Heart right ventricle (tissue), 16 donors: ENCODE measurements at regions of chr3 and their contacts with region 1.

Region 1: DNA sequence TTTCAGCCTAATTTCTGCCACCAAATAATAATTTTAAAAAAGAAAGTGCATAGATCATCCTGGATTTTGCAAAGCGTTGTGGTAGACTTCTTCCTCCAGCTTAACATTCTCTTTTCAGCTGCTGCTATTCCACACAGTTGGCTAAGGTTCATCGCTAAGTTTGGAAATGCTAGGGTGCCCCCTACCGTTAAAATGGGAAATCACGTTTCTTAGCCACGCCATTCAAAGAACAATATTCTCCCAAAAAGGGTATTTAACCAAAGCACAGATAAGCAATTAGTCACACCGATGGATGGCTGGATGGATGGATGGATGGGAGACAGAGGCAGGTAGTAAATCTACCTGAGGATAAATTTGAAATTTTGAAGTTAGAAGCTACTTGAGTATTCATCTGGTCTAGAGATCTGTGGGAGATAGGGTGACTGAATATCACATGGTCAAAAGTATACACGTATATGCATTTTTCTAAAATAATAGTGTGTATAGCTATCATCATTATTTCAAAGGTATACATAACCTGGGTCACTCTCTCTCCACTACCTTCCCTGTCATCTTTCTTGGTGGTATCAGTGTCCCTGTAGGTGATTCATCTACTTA is 67.2 kb downstream of the EFHB start:
- DNase-seq: peak in 1 of 2 donors; percentile 42
- ATAC-seq: peak in 6 of 8 donors; percentile 38 to 73 (median 66)
- H3K4me3 ChIP-seq: no peak overlapping the region
- H3K27ac ChIP-seq: no peak overlapping the region
- H3K4me1 ChIP-seq: peaks cover 0 to 6% (median 0%) of the 10 kb centered on the region in 9 donors
- H3K27me3 ChIP-seq: peaks cover 0 to 4% (median 0%) of the 10 kb centered on the region in 7 donors
- CTCF ChIP-seq: peak; percentile 61 to 81 (median 79)

Region 2: GRCh38 chr3:19046440-19046839 is 820.4 kb before region 1 on chr3:
- intact Hi-C with region 1: loop called in 2 of 10 experiments (anchors 5 to 10 kb)
- DNase-seq: no peak
- ATAC-seq: no peak
- H3K4me3 ChIP-seq: no peak overlapping the region
- H3K27ac ChIP-seq: no peak overlapping the region
- H3K4me1 ChIP-seq: no peaks in the 10 kb centered on the region
- H3K27me3 ChIP-seq: no peaks in the 10 kb centered on the region
- CTCF ChIP-seq: peak in 3 of 9 donors; percentile 16 to 39 (median 31)

Region 3: GRCh38 chr3:19065027-19065426 is 801.8 kb before region 1 on chr3:
- intact Hi-C with region 1: loop called in 4 of 10 experiments (anchors 5 to 10 kb)
- DNase-seq: no peak
- ATAC-seq: no peak
- H3K4me3 ChIP-seq: no peak overlapping the region
- H3K27ac ChIP-seq: no peak overlapping the region
- H3K4me1 ChIP-seq: no peaks in the 10 kb centered on the region
- H3K27me3 ChIP-seq: no peaks in the 10 kb centered on the region
- CTCF ChIP-seq: peak in 7 of 9 donors; percentile 38 to 62 (median 44)

Region 4: GRCh38 chr3:19284974-19285373 is 581.9 kb before region 1 on chr3:
- intact Hi-C with region 1: no loop called
- DNase-seq: no peak
- ATAC-seq: no peak
- H3K4me3 ChIP-seq: no peak overlapping the region
- H3K27ac ChIP-seq: no peak overlapping the region
- H3K4me1 ChIP-seq: no peaks in the 10 kb centered on the region
- H3K27me3 ChIP-seq: no peaks in the 10 kb centered on the region
- CTCF ChIP-seq: no peak

Region 5: DNA sequence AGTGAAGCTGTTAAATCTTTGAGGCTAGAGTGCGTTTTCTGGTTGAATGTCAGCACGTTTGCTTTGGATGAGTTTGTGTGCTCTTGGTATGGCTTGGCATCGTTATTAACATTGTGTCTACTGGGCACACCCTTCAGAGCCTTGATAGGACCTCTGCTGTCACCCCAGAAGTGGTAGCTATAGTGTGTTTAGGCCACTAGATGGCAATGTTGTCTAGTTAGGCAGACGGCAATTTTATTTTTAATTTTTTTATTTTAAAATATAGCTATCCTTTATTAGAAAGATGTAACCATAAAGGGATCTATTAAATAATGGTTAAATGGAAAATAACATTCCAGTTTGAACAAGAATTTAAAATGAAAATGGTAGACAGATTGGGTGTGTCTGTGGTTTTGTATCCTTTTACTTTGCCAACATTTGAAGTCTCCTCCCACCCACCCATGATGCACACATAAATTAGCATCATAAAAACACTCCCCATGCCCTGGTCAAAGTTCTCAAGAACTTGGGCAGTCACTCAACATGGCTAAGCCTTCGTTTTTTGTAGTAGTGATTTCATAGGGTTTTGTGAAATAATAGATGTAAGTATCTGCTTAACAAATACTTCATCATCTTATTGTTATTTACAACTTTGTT is 517.8 kb before region 1 on chr3:
- intact Hi-C with region 1: loop called in 8 of 10 experiments (anchors 2 to 5 kb)
- DNase-seq: no peak
- ATAC-seq: peak in 1 of 8 donors; percentile 51
- H3K4me3 ChIP-seq: no peak overlapping the region
- H3K27ac ChIP-seq: no peak overlapping the region
- H3K4me1 ChIP-seq: peaks cover 0 to 10% (median 0%) of the 10 kb centered on the region in 9 donors
- H3K27me3 ChIP-seq: no peaks in the 10 kb centered on the region
- CTCF ChIP-seq: peak; percentile 54 to 84 (median 78)